ENCODE measurements at regions of chr17 and their contacts with region 1.

Region 1: DNA sequence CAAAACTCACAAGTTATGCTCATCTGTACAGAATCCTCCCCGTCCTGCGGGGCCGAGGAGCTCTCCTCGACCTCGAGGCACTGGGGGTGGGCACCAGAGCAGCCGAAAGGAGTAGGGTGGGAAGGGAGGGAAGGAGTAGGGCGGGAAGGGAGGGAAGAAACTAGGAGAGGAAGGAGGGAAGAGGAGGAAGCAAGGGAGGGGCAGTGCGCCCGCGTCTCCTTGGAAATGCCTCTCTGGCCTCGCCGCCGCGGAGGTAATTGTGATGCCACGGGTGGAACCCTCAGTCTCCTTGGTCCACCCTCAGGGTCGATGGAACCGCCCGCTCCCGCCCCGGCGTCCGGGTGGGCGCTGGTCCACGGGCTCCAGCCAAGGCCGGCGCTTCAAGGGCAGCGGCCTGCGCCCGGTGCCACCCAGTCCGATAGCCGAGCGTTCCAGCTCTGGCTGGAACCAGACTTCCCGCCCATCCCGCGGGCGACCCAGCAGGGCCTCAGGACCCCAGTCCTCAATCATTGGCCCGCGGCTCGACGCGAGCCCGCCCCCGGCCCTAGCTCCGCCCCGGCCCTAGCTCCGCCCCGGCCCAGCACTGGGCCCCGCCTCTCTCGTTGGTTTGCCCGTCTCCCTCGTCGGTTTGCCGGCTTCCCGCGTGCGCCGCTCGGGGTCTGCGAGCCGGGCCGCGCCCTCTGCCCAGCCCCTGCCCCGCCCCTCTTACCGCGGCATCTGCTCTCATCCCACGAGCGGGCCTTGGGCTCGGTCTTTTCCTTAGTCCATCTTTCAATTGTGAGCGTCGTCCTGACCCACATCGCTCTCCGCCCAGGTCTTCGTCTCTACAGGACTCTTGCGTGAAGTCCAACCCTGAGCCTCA is 596 bp downstream of the PROCA1 start:
- DNase-seq: peak; percentile 78 to 93 (median 86)
- ATAC-seq: peak; percentile 92
- H3K4me3 ChIP-seq: peak overlapping the region; percentile 72
- H3K4me3 Mint-ChIP-seq: peak overlapping the region; percentile 94
- H3K27ac ChIP-seq: peak overlapping the region; percentile 68 to 73
- H3K27ac Mint-ChIP-seq: peak overlapping the region; percentile 87
- H3K4me1 ChIP-seq: peaks cover 18% of the 10 kb centered on the region
- H3K4me1 Mint-ChIP-seq: peaks cover 20% of the 10 kb centered on the region
- H3K27me3 ChIP-seq: peaks cover 4 to 5% of the 10 kb centered on the region in 2 experiments
- H3K27me3 Mint-ChIP-seq: peaks cover 17% of the 10 kb centered on the region
- CTCF ChIP-seq: no peak

Region 2: GRCh38 chr17:28247671-28248555 is 463.2 kb before region 1 on chr17:
- CTCF ChIA-PET with region 1: no interaction called
- POLR2A ChIA-PET with region 1: no interaction called
- intact Hi-C with region 1: no loop called
- DNase-seq: no peak
- ATAC-seq: no peak
- H3K4me3 ChIP-seq: no peak overlapping the region
- H3K4me3 Mint-ChIP-seq: no peak overlapping the region
- H3K27ac ChIP-seq: no peak overlapping the region
- H3K27ac Mint-ChIP-seq: no peak overlapping the region
- H3K4me1 ChIP-seq: peaks cover 12% of the 10 kb centered on the region
- H3K4me1 Mint-ChIP-seq: peaks cover 8% of the 10 kb centered on the region
- H3K27me3 ChIP-seq: peaks cover 7 to 17% of the 10 kb centered on the region in 2 experiments
- H3K27me3 Mint-ChIP-seq: peaks cover 20% of the 10 kb centered on the region
- CTCF ChIP-seq: no peak

Region 3: DNA sequence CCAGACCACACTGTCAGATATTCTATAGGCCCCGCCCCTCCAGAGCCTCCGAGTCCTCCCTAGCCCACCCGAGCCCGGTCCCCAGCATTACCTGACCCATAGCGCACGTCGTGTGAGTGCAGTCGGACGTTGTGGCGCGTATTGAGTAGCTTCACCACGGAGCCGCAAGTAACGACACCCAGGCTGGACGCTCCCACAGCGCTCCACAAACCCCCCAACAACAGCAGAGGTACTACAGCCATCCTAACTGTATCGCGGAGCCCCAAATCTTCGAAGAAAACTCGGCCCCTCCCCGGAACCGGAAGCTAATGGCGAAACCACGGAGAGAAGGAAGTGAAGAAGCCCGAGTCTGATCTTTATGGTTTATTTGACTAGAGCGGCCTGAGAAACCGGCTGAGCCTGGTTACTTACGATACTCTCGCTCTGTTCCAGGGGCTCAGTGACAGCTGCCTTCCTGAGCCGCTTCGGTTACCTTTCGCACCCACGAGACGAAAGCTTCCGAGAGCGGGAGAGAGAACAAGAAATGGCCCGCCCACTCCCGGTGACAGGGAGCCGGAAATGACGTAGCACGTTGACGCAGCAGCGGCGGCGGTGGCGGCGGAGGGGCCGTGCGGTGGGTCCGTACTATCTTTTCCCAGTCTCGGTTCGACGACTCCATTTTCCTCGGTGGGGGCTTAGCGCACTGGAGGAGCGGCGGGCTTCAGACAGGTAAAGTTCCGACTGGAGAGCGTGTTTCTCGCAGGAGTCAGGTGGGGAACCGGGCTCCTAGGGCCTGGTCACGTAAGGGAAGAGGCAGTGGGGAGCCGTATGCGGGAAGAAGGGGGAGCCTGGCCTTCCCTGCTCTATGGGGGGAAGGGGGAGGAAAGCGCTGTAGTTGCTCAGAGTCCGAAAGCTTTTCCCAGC is 49.2 kb before region 1 on chr17 and contains the starts of genes SDF2 and SUPT6H:
- CTCF ChIA-PET with region 1: interaction called, 4 read pairs
- POLR2A ChIA-PET with region 1: interaction called, 18 read pairs
- intact Hi-C with region 1: loop called in 1 of 2 experiments (anchors 5 kb)
- DNase-seq: peak; percentile 88 to 97 (median 92)
- ATAC-seq: peak; percentile 83
- H3K4me3 ChIP-seq: peak within 1 kb of the TSS; percentile 81
- H3K4me3 Mint-ChIP-seq: peak within 1 kb of the TSS; percentile 99
- H3K27ac ChIP-seq: peak within 1 kb of the TSS; percentile 97 to 99
- H3K27ac Mint-ChIP-seq: peak within 1 kb of the TSS; percentile 99
- H3K4me1 ChIP-seq: peaks cover 45% of the 10 kb centered on the region
- H3K4me1 Mint-ChIP-seq: peaks cover 64% of the 10 kb centered on the region
- H3K27me3 ChIP-seq: no peaks in the 10 kb centered on the region
- H3K27me3 Mint-ChIP-seq: no peaks in the 10 kb centered on the region
- CTCF ChIP-seq: no peak
- total RNA-seq, gene SDF2: 30.3 to 32.0 TPM
- total RNA-seq, gene SUPT6H: 149 to 151 TPM

Region 4: DNA sequence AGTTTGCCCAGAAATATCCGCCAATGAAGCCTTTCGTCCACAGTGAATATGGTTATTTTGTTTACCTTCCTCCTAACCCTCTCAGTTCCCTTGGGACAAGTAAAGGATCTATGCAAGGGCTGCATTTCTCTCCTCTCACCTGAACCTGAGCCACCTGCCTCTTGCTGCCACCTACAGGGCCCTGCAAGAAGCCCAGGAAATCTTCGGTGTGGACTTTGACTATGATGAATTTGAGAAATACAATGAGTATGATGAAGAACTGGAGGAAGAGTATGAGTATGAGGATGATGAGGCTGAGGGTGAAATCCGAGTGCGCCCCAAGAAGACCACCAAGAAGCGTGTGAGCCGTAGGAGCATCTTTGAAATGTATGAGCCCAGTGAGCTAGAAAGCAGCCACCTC is 35.1 kb before region 1 on chr17:
- CTCF ChIA-PET with region 1: no interaction called
- POLR2A ChIA-PET with region 1: no interaction called
- intact Hi-C with region 1: no loop called
- DNase-seq: peak in 2 of 14 experiments; percentile 35 to 43
- ATAC-seq: peak; percentile 57
- H3K4me3 ChIP-seq: no peak overlapping the region
- H3K4me3 Mint-ChIP-seq: no peak overlapping the region
- H3K27ac ChIP-seq: no peak overlapping the region
- H3K27ac Mint-ChIP-seq: no peak overlapping the region
- H3K4me1 ChIP-seq: no peaks in the 10 kb centered on the region
- H3K4me1 Mint-ChIP-seq: no peaks in the 10 kb centered on the region
- H3K27me3 ChIP-seq: no peaks in the 10 kb centered on the region
- H3K27me3 Mint-ChIP-seq: no peaks in the 10 kb centered on the region
- CTCF ChIP-seq: no peak

Region 5: GRCh38 chr17:28750178-28751047 is 39.3 kb after region 1 on chr17:
- CTCF ChIA-PET with region 1: interaction called, 10 read pairs
- POLR2A ChIA-PET with region 1: interaction called, 7 read pairs
- intact Hi-C with region 1: no loop called
- DNase-seq: peak; percentile 82 to 94 (median 86)
- ATAC-seq: peak; percentile 90
- H3K4me3 ChIP-seq: no peak overlapping the region
- H3K4me3 Mint-ChIP-seq: peak overlapping the region; percentile 42
- H3K27ac ChIP-seq: no peak overlapping the region
- H3K27ac Mint-ChIP-seq: peak overlapping the region; percentile 70
- H3K4me1 ChIP-seq: peaks cover 27% of the 10 kb centered on the region
- H3K4me1 Mint-ChIP-seq: peaks cover 21% of the 10 kb centered on the region
- H3K27me3 ChIP-seq: no peaks in the 10 kb centered on the region
- H3K27me3 Mint-ChIP-seq: no peaks in the 10 kb centered on the region
- CTCF ChIP-seq: peak; percentile 100

Measured in CD4-positive, alpha-beta T cell (primary cell).